ENCODE measurements at regions of chr3 and their contacts with region 1.

Region 1: DNA sequence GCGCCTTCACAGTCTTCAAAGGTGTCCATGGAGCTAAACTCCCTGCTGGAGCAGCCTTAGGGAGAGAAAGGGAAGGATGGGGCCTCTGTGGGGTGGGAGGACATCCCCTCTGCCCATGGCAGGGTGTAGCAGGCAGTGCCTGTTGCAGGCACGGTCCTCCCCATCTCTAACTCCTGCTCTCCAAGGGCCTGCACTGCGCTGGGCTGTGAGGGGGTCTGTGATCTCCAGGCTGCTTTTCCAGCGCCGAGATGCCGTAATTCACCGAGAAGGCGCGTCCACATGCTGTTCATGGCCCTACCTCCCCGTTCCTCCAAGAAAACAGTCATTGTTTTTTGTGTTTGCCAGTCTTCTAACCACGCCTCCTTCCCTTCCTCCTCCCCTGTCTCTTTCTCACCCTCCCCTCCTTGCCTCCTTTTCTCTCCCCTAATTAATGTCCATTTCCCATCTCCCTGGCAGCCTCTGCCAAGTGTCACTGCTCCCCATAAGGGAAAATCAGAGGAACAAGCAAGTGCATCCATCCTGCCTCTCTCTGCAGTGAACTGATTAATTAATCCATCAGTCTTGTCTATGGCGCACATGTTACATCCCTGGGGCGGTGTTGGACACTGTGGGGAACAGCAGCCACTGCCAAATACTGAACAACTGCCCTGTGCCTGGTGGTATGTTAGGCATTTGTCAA is 17.7 kb upstream of the LAMP3 start:
- DNase-seq: no peak
- H3K4me3 ChIP-seq: peak overlapping the region; percentile 45 to 65
- H3K27ac ChIP-seq: no peak overlapping the region
- H3K4me1 ChIP-seq: peaks cover 24% of the 10 kb centered on the region
- H3K27me3 ChIP-seq: no peaks in the 10 kb centered on the region
- CTCF ChIP-seq: no peak
- POLR2A ChIP-seq: no peak

Region 2: GRCh38 chr3:182829761-182830405 is 350.4 kb before region 1 on chr3:
- intact Hi-C with region 1: no loop called
- DNase-seq: no peak
- H3K4me3 ChIP-seq: no peak overlapping the region
- H3K27ac ChIP-seq: no peak overlapping the region
- H3K4me1 ChIP-seq: peaks cover 8% of the 10 kb centered on the region
- H3K27me3 ChIP-seq: no peaks in the 10 kb centered on the region
- CTCF ChIP-seq: no peak
- POLR2A ChIP-seq: no peak

Region 3: GRCh38 chr3:183328823-183329222 is 148.6 kb after region 1 on chr3:
- intact Hi-C with region 1: no loop called
- DNase-seq: no peak
- H3K4me3 ChIP-seq: no peak overlapping the region
- H3K27ac ChIP-seq: no peak overlapping the region
- H3K4me1 ChIP-seq: no peaks in the 10 kb centered on the region
- H3K27me3 ChIP-seq: no peaks in the 10 kb centered on the region
- CTCF ChIP-seq: no peak
- POLR2A ChIP-seq: no peak

Region 4: DNA sequence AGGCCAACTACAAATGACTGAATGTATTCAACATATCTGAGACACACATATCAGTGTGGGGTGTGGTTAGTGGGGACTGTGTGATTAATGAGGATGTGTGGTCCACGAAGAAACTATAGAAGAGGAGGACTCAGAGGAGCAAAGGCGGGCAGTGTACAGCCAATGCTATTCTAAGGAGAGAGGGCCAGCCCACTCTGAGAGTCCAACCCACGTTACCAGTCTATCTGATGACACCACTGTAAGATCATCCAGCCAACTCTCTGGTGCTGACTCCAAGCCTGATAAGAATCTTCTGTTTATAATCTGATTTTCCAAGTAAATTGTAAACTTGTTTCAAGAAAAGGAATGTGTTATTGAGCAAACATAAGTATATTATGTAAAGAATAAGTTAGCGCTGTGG is 200.9 kb after region 1 on chr3:
- intact Hi-C with region 1: loop called (anchors 5 kb)
- DNase-seq: no peak
- H3K4me3 ChIP-seq: no peak overlapping the region
- H3K27ac ChIP-seq: no peak overlapping the region
- H3K4me1 ChIP-seq: no peaks in the 10 kb centered on the region
- H3K27me3 ChIP-seq: no peaks in the 10 kb centered on the region
- CTCF ChIP-seq: no peak
- POLR2A ChIP-seq: no peak

Region 5: DNA sequence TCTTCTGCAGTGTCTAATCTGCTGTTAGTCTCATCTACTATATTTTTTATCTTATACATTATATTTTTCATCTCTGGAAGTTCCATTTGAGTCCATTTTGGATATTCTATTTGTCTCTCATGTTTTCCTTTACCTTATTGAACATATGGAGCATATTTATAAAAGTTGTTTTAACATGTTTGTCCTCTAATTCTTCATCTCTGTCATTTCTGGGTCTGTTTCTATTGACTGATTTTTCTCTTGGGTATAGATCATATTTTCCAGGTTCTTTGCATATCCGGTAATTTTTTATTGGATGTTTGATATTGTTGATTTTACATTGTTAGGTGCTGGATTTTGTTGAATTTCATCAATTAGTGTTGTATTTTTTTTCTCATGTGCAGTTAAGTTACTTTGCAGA is 417.7 kb after region 1 on chr3:
- intact Hi-C with region 1: no loop called
- DNase-seq: no peak
- H3K4me3 ChIP-seq: no peak overlapping the region
- H3K27ac ChIP-seq: no peak overlapping the region
- H3K4me1 ChIP-seq: no peaks in the 10 kb centered on the region
- H3K27me3 ChIP-seq: no peaks in the 10 kb centered on the region
- CTCF ChIP-seq: no peak
- POLR2A ChIP-seq: no peak

Region 6: GRCh38 chr3:184899953-184900595 is 1719.8 kb after region 1 on chr3:
- intact Hi-C with region 1: no loop called
- DNase-seq: no peak
- H3K4me3 ChIP-seq: no peak overlapping the region
- H3K27ac ChIP-seq: no peak overlapping the region
- H3K4me1 ChIP-seq: no peaks in the 10 kb centered on the region
- H3K27me3 ChIP-seq: no peaks in the 10 kb centered on the region
- CTCF ChIP-seq: no peak
- POLR2A ChIP-seq: no peak